PC-9 (cell line): ENCODE measurements at regions of chr15 and their contacts with region 1.

Region 1: GRCh38 chr15:92097474-92098178 is 244.1 kb downstream of the SLCO3A1 start:
- DNase-seq: no peak
- H3K4me3 ChIP-seq: no peak overlapping the region
- H3K27ac ChIP-seq: no peak overlapping the region
- H3K4me1 ChIP-seq: no peaks in the 10 kb centered on the region
- H3K27me3 ChIP-seq: no peaks in the 10 kb centered on the region
- CTCF ChIP-seq: no peak

Region 2: GRCh38 chr15:92226014-92226612 is 128.5 kb after region 1 on chr15:
- CTCF ChIA-PET with region 1: interaction called, 3 read pairs
- POLR2A ChIA-PET with region 1: no interaction called
- intact Hi-C with region 1: loop called (anchors 2 kb)
- DNase-seq: no peak
- H3K4me3 ChIP-seq: no peak overlapping the region
- H3K27ac ChIP-seq: no peak overlapping the region
- H3K4me1 ChIP-seq: no peaks in the 10 kb centered on the region
- H3K27me3 ChIP-seq: 0 out of 2 replicates have a peak, but pooled peaks cover 6% of the 10 kb centered on the region
- CTCF ChIP-seq: peak; percentile 62